Posterior cingulate gyrus (tissue), 11 donors: ENCODE measurements at regions of chr16 and their contacts with region 1.

Region 1: DNA sequence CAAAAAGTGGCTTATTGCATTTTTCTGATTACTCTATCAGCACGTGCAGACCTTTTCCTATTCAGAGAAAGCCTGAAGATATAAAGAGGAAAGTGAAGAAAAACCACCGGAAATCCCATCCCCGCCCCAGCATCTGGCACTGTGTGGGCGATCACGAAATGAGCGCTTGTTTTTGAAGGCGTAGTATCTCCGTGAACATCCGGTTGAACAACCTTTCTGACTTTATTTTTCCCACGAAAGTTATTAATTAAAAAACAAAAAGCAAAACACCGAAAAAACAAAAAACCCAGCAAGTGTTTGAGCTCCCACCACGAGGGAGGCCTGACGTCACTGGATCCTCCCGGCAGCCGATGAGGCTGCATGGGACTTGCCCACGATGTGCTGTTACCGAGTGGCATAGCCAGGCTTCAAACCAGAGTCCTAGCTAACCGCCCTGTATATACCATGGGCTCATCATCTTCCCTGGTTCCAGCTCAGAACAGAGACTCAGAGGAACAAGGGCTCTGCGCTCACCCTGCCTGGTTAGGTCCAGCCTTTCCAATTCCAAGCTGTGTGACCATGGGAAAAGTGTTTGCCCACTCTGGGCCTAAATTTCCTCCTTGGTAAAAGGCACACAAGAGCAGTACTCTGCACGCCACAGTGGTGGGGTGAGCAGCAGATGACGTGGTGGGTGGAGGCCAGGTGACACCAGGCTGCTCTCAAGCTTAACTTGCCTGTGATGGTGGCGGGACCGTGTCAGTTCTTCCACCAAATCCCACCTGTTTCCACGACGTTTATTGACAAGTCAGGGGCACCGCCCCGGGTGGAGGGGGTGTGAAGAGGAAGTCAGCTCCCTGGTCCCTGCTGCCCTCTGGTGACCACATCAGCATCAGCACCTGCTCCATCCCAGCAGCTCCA is 34.3 kb upstream of the IL21R start:
- DNase-seq: peak in 9 of 10 donors; percentile 46 to 93 (median 61)

Region 2: GRCh38 chr16:27109666-27110523 is 257.8 kb before region 1 on chr16:
- intact Hi-C with region 1: no loop called
- DNase-seq: peak; percentile 27 to 95 (median 66)

Region 3: GRCh38 chr16:27179500-27180072 is 188.1 kb before region 1 on chr16:
- intact Hi-C with region 1: loop called (anchors 2 kb)
- DNase-seq: peak in 7 of 10 donors; percentile 40 to 92 (median 69)

Region 4: DNA sequence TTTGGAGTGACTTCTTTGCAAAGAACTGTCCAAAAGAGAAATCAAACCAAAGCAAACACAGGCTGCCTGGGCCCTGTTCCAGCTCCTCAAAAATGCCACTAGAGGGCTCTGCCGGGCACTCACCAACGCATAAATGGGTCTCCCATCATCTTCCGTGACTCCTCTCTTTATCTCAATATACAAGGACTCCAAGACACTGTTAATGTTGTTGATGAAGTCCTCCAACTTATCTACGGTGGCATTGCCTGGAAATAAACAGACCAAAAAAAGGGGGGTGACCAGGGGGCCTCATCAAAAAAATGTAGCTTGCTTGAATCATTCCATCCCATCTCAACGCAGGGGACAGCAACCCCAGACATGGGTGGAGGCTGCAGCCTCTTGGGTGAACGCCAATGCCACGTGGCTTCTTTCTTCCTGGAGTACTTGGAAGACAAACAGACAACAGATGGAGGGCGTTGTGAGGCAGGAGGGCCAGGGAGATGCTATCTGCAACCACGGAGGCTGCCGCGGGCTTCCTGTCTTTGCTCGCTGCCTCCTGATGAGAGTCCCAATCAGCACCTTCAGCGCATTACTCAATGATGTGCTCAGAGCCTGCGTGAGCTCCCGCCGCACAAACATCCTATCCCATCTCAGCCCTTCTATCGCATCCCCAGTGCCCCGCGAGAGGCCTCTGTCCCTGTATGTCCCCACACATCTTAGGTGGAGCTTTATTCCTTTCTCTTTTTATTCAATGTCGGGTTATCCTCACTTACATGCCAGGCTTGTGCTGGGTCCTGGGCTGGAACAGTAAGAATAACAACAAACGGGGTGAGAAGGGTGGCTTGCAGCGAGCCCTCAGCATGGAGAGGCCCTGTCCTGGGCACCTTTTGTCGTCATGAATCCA is 132.4 kb before region 1 on chr16:
- intact Hi-C with region 1: loop called (anchors 2 kb)
- DNase-seq: peak; percentile 46 to 94 (median 70)

Region 5: GRCh38 chr16:27690608-27691007 is 322.9 kb after region 1 on chr16:
- intact Hi-C with region 1: no loop called
- DNase-seq: peak in 5 of 10 donors; percentile 38 to 89 (median 60)